OCI-LY7 (cell line): ENCODE measurements at regions of chr20 and their contacts with region 1.

Region 1: DNA sequence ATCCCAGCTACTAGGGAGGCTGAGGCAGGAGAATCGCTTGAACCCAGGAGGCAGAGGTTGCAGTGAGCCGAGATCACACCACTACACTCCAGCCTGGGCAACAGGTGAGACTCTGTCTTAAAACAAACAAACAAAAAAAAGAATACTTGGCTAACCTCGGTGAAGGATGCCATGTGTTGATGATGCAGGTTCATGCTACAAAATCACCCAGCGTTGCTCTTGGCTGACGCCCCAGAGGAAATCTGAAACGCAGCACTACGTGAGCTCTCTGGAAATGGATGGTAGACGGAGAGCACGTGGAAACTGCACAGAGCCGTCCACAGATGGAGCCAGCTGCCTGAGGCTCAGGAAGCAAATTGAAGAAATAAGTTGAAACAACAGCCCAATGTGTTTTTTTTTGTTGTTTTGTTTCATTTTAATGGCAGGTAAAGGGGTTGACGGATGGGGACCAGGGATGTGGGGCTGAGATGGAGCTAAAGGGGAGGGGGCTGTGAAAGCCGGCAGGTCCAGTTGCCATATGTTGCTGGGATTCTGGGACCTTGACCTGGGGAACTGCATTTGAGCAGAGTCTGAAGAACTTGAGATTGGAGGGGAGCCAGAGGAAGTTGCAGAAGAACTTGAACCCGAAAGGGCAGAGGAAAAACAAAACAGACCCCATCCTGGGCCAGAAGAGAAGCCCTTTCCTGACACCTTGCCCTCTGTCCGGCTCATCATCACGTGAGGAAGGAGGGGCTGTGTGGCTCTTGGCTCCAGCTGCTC is 12.8 kb upstream of the MANBAL start:
- DNase-seq: peak; percentile 64
- H3K4me3 ChIP-seq: no peak overlapping the region
- H3K27ac ChIP-seq: peak overlapping the region; percentile 12
- H3K4me1 ChIP-seq: peaks cover 47% of the 10 kb centered on the region
- CTCF ChIP-seq: peak; percentile 49

Region 2: GRCh38 chr20:37288091-37288490 is 11.4 kb after region 1 on chr20:
- CTCF ChIA-PET with region 1: no interaction called
- POLR2A ChIA-PET with region 1: interaction called, 16 read pairs
- intact Hi-C with region 1: no loop called
- DNase-seq: no peak
- H3K4me3 ChIP-seq: no peak overlapping the region
- H3K27ac ChIP-seq: no peak overlapping the region
- H3K4me1 ChIP-seq: peaks cover 24% of the 10 kb centered on the region
- CTCF ChIP-seq: no peak